H1 (cell line): ENCODE measurements at regions of chr1 and their contacts with region 1.

Region 1: GRCh38 chr1:17569200-17570161 is 30.0 kb downstream of the ARHGEF10L start:
- DNase-seq: no peak
- H3K4me3 ChIP-seq: 0 out of 8 replicates have a peak overlapping the region, but pooled peaks of 1 of the 4 experiments have one; percentile 8
- H3K27ac ChIP-seq: peak overlapping the region; percentile 24; the same call in 1 of the 2 replicates
- H3K4me1 ChIP-seq: peaks cover 23 to 78% (median 60%) of the 10 kb centered on the region in 4 experiments
- H3K27me3 ChIP-seq: no peaks in the 10 kb centered on the region
- CTCF ChIP-seq: no peak
- EP300 ChIP-seq: no peak
- POLR2A ChIP-seq: no peak
- RAD21 ChIP-seq: no peak

Region 2: DNA sequence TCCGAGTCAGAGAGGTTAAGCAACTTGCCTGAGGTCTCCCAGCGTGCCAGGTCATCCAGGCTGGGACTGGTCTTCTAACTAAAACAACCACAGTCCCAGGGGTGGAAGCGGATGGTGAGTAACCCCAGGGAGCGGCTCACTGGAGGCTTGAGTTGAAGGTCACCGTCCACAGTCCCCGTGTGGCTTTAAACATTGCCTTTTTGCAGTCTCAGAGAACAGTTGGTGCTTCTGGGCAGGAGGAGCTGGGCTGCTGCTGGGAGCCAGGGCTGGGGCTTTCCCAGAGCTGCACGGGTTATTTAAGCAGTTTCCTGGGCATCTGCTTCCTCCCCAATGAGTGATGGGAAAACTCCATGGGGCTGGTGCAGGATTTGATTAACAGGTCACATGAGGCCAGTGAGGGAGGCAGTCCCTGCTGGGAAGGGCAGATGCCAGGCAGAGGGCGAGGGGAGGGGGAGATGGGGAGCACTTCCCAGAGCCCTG is 17.7 kb before region 1 on chr1:
- CTCF ChIA-PET with region 1: interaction called, 417 read pairs
- POLR2A ChIA-PET with region 1: interaction called, 102 read pairs
- DNase-seq: no peak
- H3K4me3 ChIP-seq: peak overlapping the region in 2 of 4 experiments; percentile 7 to 44; a peak in 3 of 8 replicates
- H3K27ac ChIP-seq: no peak overlapping the region; the same call in 1 of the 2 replicates
- H3K4me1 ChIP-seq: peaks cover 18 to 50% (median 37%) of the 10 kb centered on the region in 4 experiments
- H3K27me3 ChIP-seq: no peaks in the 10 kb centered on the region
- CTCF ChIP-seq: no peak
- EP300 ChIP-seq: no peak
- POLR2A ChIP-seq: no peak; a peak in 1 of 3 replicates
- RAD21 ChIP-seq: no peak

Region 3: DNA sequence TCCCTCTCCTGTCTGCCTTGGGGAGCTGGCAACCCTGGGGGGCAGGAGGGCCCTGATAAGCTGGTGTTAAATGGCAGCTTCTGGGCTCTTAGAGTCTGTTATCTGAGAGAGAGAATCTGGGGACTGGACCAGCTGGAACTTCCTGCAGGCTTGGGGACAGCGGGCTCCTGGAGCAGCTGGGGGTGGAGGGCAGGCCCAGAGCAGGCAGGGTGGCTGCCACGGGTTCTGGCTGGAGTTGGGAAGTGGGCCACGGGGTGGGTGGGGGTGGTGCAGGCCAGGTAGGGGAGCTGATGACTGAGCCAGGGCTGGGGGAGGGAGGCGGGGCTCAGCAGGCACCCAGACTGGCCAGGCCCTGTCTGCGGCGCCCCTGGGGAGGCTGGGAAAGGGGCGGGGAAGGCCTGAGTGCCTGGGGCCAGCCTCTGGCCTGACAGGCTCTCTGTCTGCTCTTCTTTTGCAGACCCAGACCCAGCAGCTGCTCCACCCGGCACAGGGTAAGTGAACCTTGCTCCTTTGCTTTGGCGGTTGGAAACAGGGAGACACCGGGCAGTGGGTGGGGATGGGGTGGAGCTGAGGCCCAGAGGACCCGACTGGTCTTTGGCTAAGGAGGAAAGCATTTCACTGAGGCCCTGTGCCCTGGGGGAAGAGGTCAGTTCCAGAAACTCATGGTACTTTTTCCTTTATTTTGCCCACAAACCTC is 18.7 kb after region 1 on chr1:
- CTCF ChIA-PET with region 1: interaction called, 612 read pairs
- POLR2A ChIA-PET with region 1: interaction called, 12 read pairs
- DNase-seq: no peak
- H3K4me3 ChIP-seq: peak overlapping the region in 1 of 4 experiments; percentile 34; a peak in 2 of 8 replicates
- H3K27ac ChIP-seq: peak overlapping the region; percentile 64
- H3K4me1 ChIP-seq: peaks cover 10 to 35% (median 24%) of the 10 kb centered on the region in 4 experiments
- H3K27me3 ChIP-seq: no peaks in the 10 kb centered on the region; a peak in 1 of 7 replicates
- CTCF ChIP-seq: no peak
- EP300 ChIP-seq: no peak
- POLR2A ChIP-seq: no peak
- RAD21 ChIP-seq: no peak

Region 4: DNA sequence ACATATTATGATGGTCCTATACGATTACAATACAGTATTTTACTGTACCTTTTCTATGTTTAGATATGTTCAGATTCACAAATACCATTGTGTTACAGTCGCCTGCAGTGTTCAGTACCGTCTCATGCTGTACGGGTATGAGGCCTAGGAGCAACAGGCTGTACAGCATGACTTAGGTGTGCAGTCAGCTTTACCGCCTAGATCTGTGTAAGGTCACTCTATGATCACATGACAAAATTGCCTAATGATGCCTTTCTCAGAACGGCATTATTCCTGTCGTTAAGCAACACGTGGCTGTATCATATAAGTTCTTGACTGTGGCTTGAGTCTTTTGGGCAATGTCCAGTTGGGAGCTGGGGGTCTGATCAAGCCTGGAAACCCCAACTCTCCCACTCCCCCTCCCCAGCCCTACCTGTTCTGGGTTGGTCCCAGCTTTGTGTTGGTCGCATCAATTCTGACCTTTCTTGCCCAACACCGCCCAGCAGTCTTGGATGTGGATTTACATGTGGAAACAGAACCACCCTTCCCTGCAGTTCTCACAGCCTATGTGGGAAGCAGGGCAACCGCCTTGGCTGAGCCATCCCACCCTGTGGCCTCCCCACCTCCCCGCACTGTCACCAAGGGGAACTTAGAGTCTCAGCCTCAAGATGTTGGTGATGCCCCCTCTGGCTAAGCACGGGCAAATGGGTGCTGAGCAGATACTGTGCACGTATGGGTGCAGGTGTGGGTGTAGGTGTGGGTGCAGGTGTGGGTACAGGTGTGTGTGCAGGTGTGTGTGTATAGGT is 105.4 kb after region 1 on chr1:
- CTCF ChIA-PET with region 1: no interaction called
- POLR2A ChIA-PET with region 1: no interaction called
- DNase-seq: no peak
- H3K4me3 ChIP-seq: no peak overlapping the region
- H3K27ac ChIP-seq: no peak overlapping the region
- H3K4me1 ChIP-seq: peaks cover 0 to 15% (median 7%) of the 10 kb centered on the region in 4 experiments; a peak in 5 of 7 replicates
- H3K27me3 ChIP-seq: no peaks in the 10 kb centered on the region
- CTCF ChIP-seq: no peak
- EP300 ChIP-seq: no peak
- POLR2A ChIP-seq: no peak
- RAD21 ChIP-seq: no peak